Caco-2 (cell line): ENCODE measurements at regions of chr2 and their contacts with region 1.

Region 1: DNA sequence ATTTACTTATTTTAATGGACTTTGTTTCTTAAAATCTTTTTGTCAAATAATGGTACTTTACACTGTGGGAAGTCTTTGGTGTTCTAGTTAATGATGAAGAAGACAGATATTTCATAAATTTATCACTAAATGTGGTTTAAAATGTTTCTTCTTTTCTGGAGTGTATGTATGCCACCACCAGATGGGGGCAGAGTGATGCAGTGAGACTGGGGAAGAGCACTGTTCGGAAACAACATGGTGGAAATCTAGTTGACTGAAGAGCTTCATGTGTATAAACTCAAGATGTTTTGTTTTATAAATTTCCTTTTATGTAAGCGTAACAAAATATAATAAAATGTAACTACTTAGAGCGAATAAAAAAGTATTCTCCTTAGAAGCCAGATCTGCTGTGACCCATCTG is 195.1 kb downstream of the KCNE4 start:
- DNase-seq: no peak
- H3K4me3 ChIP-seq: no peak overlapping the region
- H3K4me3 Mint-ChIP-seq: no peak overlapping the region
- H3K27ac Mint-ChIP-seq: no peak overlapping the region
- H3K4me1 ChIP-seq: no peaks in the 10 kb centered on the region
- H3K4me1 Mint-ChIP-seq: no peaks in the 10 kb centered on the region
- H3K27me3 ChIP-seq: no peaks in the 10 kb centered on the region; the same call in 1 of the 2 replicates
- H3K27me3 Mint-ChIP-seq: peaks cover 7% of the 10 kb centered on the region
- CTCF ChIP-seq: peak; percentile 42 to 46

Region 2: DNA sequence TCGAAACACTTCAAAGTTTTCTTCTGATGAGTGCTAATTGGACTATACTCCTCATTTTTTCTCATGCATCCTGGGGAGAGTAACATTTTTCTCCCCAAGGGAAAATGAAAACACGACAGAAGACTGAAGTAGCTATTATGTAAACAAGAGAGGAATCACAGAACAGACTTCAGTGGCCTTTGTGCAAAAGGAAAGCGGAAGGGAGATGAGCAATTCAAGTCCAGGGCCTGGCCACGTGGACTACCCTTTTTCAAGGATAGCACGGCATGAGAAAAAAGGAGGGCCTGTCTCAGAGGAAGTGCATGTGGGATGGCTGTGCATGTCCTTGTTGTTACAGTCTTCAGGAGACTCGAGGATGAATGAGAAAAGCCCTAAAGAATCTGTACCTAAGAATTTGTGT is 239.0 kb before region 1 on chr2:
- CTCF ChIA-PET with region 1: no interaction called
- POLR2A ChIA-PET with region 1: no interaction called
- intact Hi-C with region 1: no loop called
- DNase-seq: no peak
- H3K4me3 ChIP-seq: no peak overlapping the region
- H3K4me3 Mint-ChIP-seq: no peak overlapping the region
- H3K27ac Mint-ChIP-seq: no peak overlapping the region
- H3K4me1 ChIP-seq: no peaks in the 10 kb centered on the region
- H3K4me1 Mint-ChIP-seq: no peaks in the 10 kb centered on the region
- H3K27me3 ChIP-seq: no peaks in the 10 kb centered on the region
- H3K27me3 Mint-ChIP-seq: peaks cover 12% of the 10 kb centered on the region
- CTCF ChIP-seq: no peak

Region 3: DNA sequence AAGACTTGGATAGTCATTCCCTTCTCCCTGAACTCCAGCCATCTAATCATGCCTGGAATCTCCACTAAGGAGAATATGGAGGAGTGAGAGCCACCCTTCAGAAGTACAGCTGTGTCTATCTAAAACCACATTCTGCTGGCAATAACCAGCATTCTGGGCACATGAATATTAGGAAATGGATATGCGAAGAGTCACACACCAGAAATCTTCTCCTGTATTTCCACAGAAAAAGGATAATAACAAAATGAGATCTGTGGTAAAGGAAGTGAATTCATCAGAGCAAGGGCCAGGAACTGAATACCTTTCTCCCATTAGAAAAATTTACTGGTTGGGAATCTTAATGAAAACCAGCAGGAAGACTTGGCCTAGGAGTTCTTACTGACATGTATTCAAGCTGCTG is 136.2 kb after region 1 on chr2:
- CTCF ChIA-PET with region 1: no interaction called
- POLR2A ChIA-PET with region 1: no interaction called
- intact Hi-C with region 1: loop called (anchors 1 kb)
- DNase-seq: no peak
- H3K4me3 ChIP-seq: no peak overlapping the region
- H3K4me3 Mint-ChIP-seq: no peak overlapping the region
- H3K27ac Mint-ChIP-seq: no peak overlapping the region
- H3K4me1 ChIP-seq: no peaks in the 10 kb centered on the region
- H3K4me1 Mint-ChIP-seq: no peaks in the 10 kb centered on the region
- H3K27me3 ChIP-seq: no peaks in the 10 kb centered on the region
- H3K27me3 Mint-ChIP-seq: peaks cover 19% of the 10 kb centered on the region
- CTCF ChIP-seq: no peak